ENCODE measurements at regions of chr10 and their contacts with region 1.

Region 1: DNA sequence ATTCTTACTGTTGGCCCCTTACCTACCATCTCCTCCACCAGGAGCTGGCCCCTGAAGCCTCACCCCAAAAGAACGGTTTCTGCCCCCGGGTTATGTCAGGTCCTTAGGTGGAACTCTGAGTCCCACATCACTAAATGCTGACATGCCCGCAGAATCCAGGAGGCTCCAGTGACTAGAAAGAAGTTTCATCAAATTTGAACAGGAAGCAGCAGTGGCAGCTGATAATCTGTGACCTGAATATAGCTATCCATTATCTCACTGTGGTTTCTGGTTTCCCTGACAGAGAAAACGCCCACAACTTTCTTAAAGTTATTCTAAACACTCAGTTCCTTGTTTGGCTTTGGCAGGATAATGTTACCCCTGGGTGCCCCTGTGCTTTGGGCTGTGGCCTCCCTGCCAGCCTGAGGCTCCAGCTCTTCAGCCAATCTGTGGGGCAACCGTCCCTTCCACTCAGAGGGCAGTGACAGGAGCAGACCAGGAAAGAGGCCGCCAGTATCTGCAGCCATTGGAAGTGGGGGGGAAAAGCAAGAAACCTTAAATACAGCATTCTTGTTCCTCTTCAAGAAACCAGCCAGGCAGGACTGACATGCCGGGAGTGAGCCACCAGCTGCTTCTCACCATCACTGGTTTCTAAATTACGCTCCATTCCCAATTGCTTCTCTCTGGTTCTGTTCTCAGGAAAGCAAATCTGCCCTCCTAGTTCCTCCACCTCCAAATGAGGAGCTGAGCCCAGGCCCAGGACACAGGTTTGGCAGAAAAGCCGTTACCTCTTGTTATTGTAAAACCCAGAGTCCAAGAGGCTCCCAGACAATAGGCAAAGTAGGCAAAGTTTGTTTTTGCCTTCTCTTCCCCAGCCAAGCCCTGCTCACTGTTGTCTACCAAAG is 41.2 kb upstream of the VCL start:
- DNase-seq: peak; percentile 64 to 78 (median 72)
- H3K4me3 ChIP-seq: peak overlapping the region; percentile 4 to 30
- H3K4me3 Mint-ChIP-seq: peak overlapping the region; percentile 66 to 94 (median 86)
- H3K27ac ChIP-seq: peak overlapping the region; percentile 52
- H3K27ac Mint-ChIP-seq: peak overlapping the region; percentile 94 to 99 (median 97)
- H3K4me1 ChIP-seq: peaks cover 70% of the 10 kb centered on the region
- H3K4me1 Mint-ChIP-seq: peaks cover 43 to 64% (median 54%) of the 10 kb centered on the region in 4 donors
- H3K27me3 ChIP-seq: no peaks in the 10 kb centered on the region
- H3K27me3 Mint-ChIP-seq: no peaks in the 10 kb centered on the region

Region 2: DNA sequence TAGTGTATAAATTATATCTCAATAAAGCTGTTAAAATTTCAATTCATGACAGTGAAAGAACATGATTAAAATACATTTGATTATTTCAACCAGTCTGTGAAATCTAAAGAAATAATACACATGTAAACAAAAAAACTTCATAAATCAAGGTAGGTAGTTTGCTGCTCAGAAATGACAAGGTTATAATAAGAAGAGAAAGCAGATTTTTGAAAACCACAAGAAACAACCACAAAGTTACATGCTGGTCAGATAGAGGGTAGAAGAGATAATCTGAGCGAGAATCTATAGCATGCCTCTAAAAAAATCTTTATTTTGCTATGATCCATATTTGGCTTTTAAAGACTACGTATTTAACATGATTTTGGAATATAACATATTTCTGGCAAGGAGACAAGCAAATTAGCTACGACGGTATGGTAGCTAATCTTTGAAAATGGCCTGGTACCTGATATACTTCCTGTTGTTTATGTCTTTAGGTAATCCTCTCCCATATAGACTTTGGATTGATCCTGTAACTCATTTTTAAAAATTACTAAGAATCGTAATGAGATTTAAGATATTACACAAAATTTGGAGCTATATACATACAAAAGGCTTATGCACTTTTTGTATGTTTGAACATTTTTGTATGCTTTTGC is 17.7 kb after region 1 on chr10:
- CTCF ChIA-PET with region 1: interaction called, 40 read pairs
- POLR2A ChIA-PET with region 1: interaction called, 18 read pairs
- intact Hi-C with region 1: loop called (anchors 2 kb)
- DNase-seq: peak in 4 of 5 donors; percentile 43 to 60 (median 48)
- H3K4me3 ChIP-seq: no peak overlapping the region
- H3K4me3 Mint-ChIP-seq: peak overlapping the region; percentile 21 to 70 (median 56)
- H3K27ac ChIP-seq: no peak overlapping the region
- H3K27ac Mint-ChIP-seq: peak overlapping the region; percentile 1 to 75 (median 37)
- H3K4me1 ChIP-seq: peaks cover 24% of the 10 kb centered on the region
- H3K4me1 Mint-ChIP-seq: peaks cover 15 to 37% (median 22%) of the 10 kb centered on the region in 4 donors
- H3K27me3 ChIP-seq: no peaks in the 10 kb centered on the region
- H3K27me3 Mint-ChIP-seq: no peaks in the 10 kb centered on the region

Region 3: DNA sequence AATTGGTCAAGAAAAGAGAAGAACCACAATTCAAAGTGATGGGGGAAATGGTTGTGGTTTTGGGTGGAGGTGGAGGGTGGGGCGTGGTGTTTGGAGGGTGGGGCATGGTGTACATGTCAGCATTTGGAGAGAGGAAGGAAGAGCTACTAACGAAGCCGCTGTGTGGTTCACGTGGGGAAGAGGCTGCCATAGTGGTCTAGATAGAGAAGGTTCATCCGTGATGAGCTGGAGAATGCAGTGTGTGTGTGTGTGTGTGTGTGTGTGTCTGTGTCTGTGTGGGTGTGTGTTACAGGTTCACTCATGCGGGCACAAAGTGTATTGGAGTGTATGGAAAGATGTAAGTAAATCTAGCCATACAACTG is 35.1 kb after region 1 on chr10:
- CTCF ChIA-PET with region 1: interaction called, 41 read pairs
- POLR2A ChIA-PET with region 1: interaction called, 40 read pairs
- intact Hi-C with region 1: no loop called
- DNase-seq: peak; percentile 82 to 90 (median 88)
- H3K4me3 ChIP-seq: no peak overlapping the region
- H3K4me3 Mint-ChIP-seq: peak overlapping the region; percentile 36 to 89 (median 60)
- H3K27ac ChIP-seq: peak overlapping the region; percentile 7
- H3K27ac Mint-ChIP-seq: peak overlapping the region; percentile 70 to 97 (median 93)
- H3K4me1 ChIP-seq: peaks cover 34% of the 10 kb centered on the region
- H3K4me1 Mint-ChIP-seq: peaks cover 23 to 62% (median 43%) of the 10 kb centered on the region in 4 donors
- H3K27me3 ChIP-seq: no peaks in the 10 kb centered on the region
- H3K27me3 Mint-ChIP-seq: no peaks in the 10 kb centered on the region

Region 4: DNA sequence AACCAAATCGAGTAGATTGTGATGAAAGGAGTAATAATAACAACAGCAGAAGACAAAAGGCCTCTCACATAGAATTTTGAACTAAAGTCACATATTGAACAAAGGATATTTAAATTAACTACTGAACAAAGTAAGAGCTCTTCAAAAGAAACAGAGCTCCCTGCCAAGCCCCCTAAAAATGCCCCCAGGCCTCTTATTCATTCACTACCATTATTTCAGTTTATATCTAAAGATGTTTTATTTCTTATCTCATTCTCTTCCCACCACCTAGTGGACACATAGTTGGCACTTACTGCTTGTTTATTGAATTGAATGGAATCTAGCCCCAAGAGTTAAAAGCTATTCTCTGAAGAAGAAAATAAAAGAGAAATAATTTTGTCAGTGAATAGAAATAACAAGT is 78.6 kb after region 1 on chr10:
- CTCF ChIA-PET with region 1: interaction called, 25 read pairs
- POLR2A ChIA-PET with region 1: interaction called, 4 read pairs
- intact Hi-C with region 1: loop called (anchors 5 kb)
- DNase-seq: peak in 1 of 5 donors; percentile 14
- H3K4me3 ChIP-seq: no peak overlapping the region
- H3K4me3 Mint-ChIP-seq: no peak overlapping the region
- H3K27ac ChIP-seq: no peak overlapping the region
- H3K27ac Mint-ChIP-seq: peak overlapping the region in 6 of 7 donors; percentile 31 to 90 (median 80)
- H3K4me1 ChIP-seq: peaks cover 41% of the 10 kb centered on the region
- H3K4me1 Mint-ChIP-seq: peaks cover 43 to 64% (median 48%) of the 10 kb centered on the region in 4 donors
- H3K27me3 ChIP-seq: no peaks in the 10 kb centered on the region
- H3K27me3 Mint-ChIP-seq: no peaks in the 10 kb centered on the region

Measured in CD4-positive, alpha-beta memory T cell (primary cell).